ENCODE measurements at regions of chr2 and their contacts with region 1.

Region 1: GRCh38 chr2:85017411-85018048 is 46.6 kb downstream of the KCMF1 start:
- DNase-seq: no peak
- H3K4me3 ChIP-seq: no peak overlapping the region
- H3K27ac ChIP-seq: peak overlapping the region; percentile 49
- H3K4me1 ChIP-seq: peaks cover 32% of the 10 kb centered on the region
- H3K27me3 ChIP-seq: no peaks in the 10 kb centered on the region
- CTCF ChIP-seq: peak; percentile 29 to 37

Region 2: GRCh38 chr2:84102274-84102673 is 915.3 kb before region 1 on chr2:
- CTCF ChIA-PET with region 1: no interaction called
- dilution Hi-C with region 1: no loop called
- in situ Hi-C with region 1: no loop called
- intact Hi-C with region 1: no loop called
- DNase-seq: no peak
- H3K4me3 ChIP-seq: no peak overlapping the region
- H3K27ac ChIP-seq: no peak overlapping the region
- H3K4me1 ChIP-seq: no peaks in the 10 kb centered on the region
- H3K27me3 ChIP-seq: no peaks in the 10 kb centered on the region
- CTCF ChIP-seq: no peak

Region 3: GRCh38 chr2:84495539-84496146 is 521.9 kb before region 1 on chr2:
- CTCF ChIA-PET with region 1: no interaction called
- dilution Hi-C with region 1: no loop called
- in situ Hi-C with region 1: no loop called
- intact Hi-C with region 1: loop called (anchors 2 kb)
- DNase-seq: peak; percentile 39
- H3K4me3 ChIP-seq: no peak overlapping the region
- H3K27ac ChIP-seq: no peak overlapping the region
- H3K4me1 ChIP-seq: peaks cover 2% of the 10 kb centered on the region
- H3K27me3 ChIP-seq: no peaks in the 10 kb centered on the region
- CTCF ChIP-seq: peak; percentile 49 to 56

Region 4: DNA sequence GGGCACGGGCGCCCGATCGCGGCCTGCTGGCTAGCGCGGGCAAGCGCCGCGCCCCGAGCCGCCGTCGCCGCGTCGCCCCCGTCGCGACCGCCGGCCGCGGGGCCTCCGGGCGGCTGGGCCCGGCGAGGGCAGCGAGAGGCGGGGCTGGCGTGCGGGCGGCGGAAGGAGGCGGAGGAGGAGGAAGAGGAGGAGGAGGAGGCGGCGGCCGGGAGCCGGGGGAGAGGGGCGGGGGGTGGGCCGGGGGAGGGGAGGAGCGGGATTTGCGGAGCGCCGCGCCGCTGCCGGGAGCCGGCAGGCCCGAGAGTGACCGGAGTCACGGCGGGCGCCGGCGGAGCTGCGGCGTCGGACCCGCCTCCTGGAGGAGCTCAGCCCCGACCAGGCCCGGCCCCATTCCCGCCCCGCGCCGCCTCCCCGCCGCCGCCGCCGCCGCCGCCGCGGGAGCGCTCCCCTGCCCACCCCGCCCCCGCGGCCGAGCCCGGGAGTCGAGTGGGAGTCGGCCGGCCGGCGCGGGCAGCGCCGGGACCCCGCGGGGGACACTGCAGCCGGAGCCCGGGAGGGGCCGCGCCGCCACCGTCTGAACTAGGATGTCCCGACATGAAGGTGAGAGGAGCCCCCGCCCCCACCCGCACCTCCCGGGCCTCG is 46.5 kb before region 1 on chr2 and contains the start of gene KCMF1:
- CTCF ChIA-PET with region 1: interaction called, 7 read pairs
- dilution Hi-C with region 1: no loop called
- in situ Hi-C with region 1: no loop called
- intact Hi-C with region 1: loop called (anchors 1 kb)
- DNase-seq: peak; percentile 77
- H3K4me3 ChIP-seq: peak within 1 kb of the TSS; percentile 76 to 94 (median 81)
- H3K27ac ChIP-seq: peak within 1 kb of the TSS; percentile 93
- H3K4me1 ChIP-seq: peaks cover 4% of the 10 kb centered on the region
- H3K27me3 ChIP-seq: no peaks in the 10 kb centered on the region
- CTCF ChIP-seq: no peak
- total RNA-seq, gene KCMF1: 73.2 to 94.7 TPM

Region 5: GRCh38 chr2:84991404-84992151 is 26.0 kb before region 1 on chr2:
- CTCF ChIA-PET with region 1: no interaction called
- dilution Hi-C with region 1: no loop called
- in situ Hi-C with region 1: no loop called
- intact Hi-C with region 1: no loop called
- DNase-seq: peak; percentile 84
- H3K4me3 ChIP-seq: no peak overlapping the region
- H3K27ac ChIP-seq: peak overlapping the region; percentile 8
- H3K4me1 ChIP-seq: peaks cover 28% of the 10 kb centered on the region
- H3K27me3 ChIP-seq: no peaks in the 10 kb centered on the region
- CTCF ChIP-seq: no peak

Region 6: DNA sequence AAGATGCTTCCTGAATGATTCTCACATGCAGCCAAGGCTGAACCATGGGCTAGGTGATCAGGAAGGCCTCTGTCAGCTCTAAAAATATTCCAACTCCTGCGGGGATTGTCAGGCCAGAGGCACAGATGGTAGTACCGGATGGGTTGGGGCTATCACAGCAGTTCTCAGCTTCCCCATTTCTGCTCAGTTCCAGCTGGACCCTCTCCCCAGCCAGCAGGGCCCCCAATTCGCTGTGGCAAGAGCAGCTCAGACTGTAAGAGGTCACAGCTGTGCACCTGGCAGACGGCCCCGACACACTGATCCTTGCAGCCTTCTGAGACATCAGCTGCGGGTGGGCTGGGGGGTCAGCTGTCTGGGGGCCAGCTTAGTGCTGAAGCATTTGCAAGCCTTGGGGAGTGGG is 72.1 kb after region 1 on chr2:
- CTCF ChIA-PET with region 1: no interaction called
- dilution Hi-C with region 1: no loop called
- in situ Hi-C with region 1: no loop called
- intact Hi-C with region 1: no loop called
- DNase-seq: no peak
- H3K4me3 ChIP-seq: no peak overlapping the region
- H3K27ac ChIP-seq: no peak overlapping the region
- H3K4me1 ChIP-seq: no peaks in the 10 kb centered on the region
- H3K27me3 ChIP-seq: no peaks in the 10 kb centered on the region
- CTCF ChIP-seq: no peak

Region 7: GRCh38 chr2:85619617-85620016 is 602.1 kb after region 1 on chr2:
- CTCF ChIA-PET with region 1: no interaction called
- dilution Hi-C with region 1: no loop called
- in situ Hi-C with region 1: no loop called
- intact Hi-C with region 1: no loop called
- DNase-seq: no peak
- H3K4me3 ChIP-seq: no peak overlapping the region
- H3K27ac ChIP-seq: no peak overlapping the region
- H3K4me1 ChIP-seq: peaks cover 10% of the 10 kb centered on the region
- H3K27me3 ChIP-seq: no peaks in the 10 kb centered on the region
- CTCF ChIP-seq: no peak